ENCODE measurements at regions of chr19 and their contacts with region 1.

Region 1: DNA sequence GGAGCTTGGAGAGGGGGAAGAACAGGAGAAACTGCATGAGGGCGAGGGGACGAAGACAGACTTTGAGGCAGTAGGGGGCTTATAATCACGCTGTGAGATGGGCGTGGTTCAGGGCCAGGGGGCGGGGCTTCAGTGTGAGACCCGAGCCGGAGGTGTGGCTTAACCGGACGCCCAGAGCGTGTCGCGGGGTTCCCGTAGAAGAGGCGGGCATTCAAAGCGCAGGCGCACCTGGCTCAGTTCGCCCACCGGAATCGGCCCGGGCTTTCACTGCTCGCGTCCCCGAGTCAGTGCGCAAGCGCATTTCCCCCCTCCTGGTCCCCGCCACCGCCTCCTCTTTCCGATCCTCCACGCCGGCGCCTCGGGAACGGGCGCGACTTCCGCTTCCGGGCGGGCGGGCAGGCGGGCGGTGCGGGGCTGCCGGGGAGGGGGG is 225 bp upstream of the ZNF865 start:
- DNase-seq: peak; percentile 99
- H3K4me3 Mint-ChIP-seq: peak overlapping the region; percentile 84
- H3K27ac Mint-ChIP-seq: peak overlapping the region; percentile 80
- H3K4me1 Mint-ChIP-seq: peaks cover 46% of the 10 kb centered on the region
- H3K27me3 Mint-ChIP-seq: no peaks in the 10 kb centered on the region
- CTCF ChIP-seq: no peak

Region 2: DNA sequence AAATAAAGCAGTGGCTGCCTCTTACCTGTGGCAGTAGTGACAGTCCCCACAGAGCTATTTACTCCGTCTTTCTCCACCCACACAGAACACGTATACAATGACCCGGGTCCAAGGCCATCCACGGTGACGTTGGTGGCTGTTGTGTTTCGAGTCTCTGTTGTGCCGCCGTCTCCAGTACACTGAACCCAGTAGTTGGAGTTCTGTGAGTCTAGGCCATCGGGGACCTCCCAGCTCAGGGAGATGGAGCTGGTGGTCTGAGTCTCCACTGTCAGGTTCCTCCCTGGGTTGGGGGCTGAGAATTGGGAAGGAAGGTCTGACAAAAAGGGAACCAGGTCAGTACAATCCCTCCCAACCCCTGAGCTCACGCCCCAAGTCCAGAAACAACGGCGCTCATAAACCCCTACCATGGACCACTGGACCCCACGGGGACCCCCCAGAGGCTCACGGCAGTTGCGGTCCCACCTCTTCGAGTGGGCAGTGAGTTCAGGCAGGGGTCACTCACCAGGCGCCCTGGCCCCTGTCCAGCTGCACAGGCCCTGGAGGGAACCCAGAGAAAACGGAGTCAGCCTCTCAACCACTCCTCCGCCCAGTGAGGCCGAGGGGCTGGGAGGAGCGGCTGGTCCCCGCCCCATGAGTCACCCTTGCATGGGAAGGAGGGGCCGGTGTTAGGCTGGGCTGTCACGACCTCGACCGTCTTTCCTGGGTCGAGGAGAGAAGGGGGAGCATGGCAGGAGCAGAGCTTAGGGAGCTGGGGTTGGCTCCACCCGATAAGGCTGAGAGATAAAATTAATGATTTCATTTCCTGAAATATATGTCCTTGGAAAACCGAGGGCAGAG is 398.3 kb before region 1 on chr19:
- CTCF ChIA-PET with region 1: no interaction called
- POLR2A ChIA-PET with region 1: no interaction called
- intact Hi-C with region 1: no loop called
- DNase-seq: peak; percentile 93
- H3K4me3 Mint-ChIP-seq: peak overlapping the region; percentile 66
- H3K27ac Mint-ChIP-seq: peak overlapping the region; percentile 91
- H3K4me1 Mint-ChIP-seq: peaks cover 21% of the 10 kb centered on the region
- H3K27me3 Mint-ChIP-seq: no peaks in the 10 kb centered on the region
- CTCF ChIP-seq: no peak

Region 3: GRCh38 chr19:55467236-55468053 is 137.8 kb before region 1 on chr19:
- CTCF ChIA-PET with region 1: interaction called, 12 read pairs
- POLR2A ChIA-PET with region 1: interaction called, 4 read pairs
- intact Hi-C with region 1: no loop called
- DNase-seq: peak; percentile 65
- H3K4me3 Mint-ChIP-seq: no peak overlapping the region
- H3K27ac Mint-ChIP-seq: no peak overlapping the region
- H3K4me1 Mint-ChIP-seq: peaks cover 2% of the 10 kb centered on the region
- H3K27me3 Mint-ChIP-seq: no peaks in the 10 kb centered on the region
- CTCF ChIP-seq: peak; percentile 98

Region 4: DNA sequence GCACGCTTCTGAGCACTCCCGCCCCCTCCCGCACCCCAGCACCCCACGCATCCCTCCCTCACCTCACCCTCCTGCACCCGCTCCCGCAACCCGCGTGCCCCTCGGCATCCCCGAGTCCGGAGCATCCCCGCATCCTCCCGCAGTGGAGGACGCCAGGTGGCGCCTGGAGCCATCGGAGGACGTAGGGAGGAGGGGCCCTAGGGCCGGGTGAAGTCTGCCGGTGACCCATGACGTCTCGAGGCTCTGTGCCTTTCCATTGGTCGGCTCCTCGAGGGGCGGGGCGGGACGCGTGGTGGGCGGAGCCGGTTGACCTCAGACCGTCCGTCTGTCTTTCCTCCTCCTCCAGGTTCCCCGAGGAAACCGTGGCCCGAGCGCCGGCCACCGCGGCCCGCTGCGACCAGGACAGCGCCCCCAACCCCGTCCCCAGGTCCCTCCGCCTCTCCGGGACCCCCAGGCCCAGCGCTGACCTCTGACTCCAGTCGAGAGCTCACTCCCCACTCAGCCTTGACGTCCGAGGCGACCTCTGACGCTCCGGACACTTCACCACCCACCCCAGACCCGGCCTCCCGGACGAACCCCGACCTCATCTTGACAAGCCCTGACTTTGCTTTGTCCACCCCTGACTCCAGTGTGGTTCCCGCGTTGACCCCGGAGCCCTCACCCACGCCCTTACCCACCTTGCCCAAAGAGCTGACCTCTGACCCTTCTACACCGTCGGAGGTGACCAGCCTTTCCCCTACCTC is 88.2 kb before region 1 on chr19:
- CTCF ChIA-PET with region 1: interaction called, 29 read pairs
- POLR2A ChIA-PET with region 1: interaction called, 4 read pairs
- intact Hi-C with region 1: loop called (anchors 1 kb)
- DNase-seq: peak; percentile 94
- H3K4me3 Mint-ChIP-seq: peak overlapping the region; percentile 73
- H3K27ac Mint-ChIP-seq: peak overlapping the region; percentile 74
- H3K4me1 Mint-ChIP-seq: peaks cover 5% of the 10 kb centered on the region
- H3K27me3 Mint-ChIP-seq: peaks cover 11% of the 10 kb centered on the region
- CTCF ChIP-seq: peak; percentile 79

Region 5: DNA sequence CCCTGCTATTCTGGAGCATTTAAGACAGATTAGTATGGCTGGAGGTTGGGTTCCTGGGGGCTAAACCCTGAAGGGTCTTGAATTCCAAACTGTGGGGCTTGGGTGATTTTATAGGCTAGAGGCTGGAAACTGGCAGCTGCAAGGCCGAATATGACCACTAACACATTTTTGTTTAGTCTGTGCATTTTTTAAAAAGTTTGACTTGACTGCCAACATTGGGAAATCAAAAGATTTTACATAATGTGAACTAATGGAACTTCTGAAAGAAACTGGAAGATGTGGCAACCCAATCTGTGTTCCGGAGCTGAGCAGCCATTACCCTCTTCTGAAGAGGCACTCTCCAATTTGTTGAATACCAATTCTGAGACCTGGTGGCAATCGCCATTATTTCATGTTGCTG is 14.1 kb after region 1 on chr19:
- CTCF ChIA-PET with region 1: interaction called, 17 read pairs
- POLR2A ChIA-PET with region 1: interaction called, 15 read pairs
- intact Hi-C with region 1: loop called (anchors 1 kb)
- DNase-seq: no peak
- H3K4me3 Mint-ChIP-seq: no peak overlapping the region
- H3K27ac Mint-ChIP-seq: no peak overlapping the region
- H3K4me1 Mint-ChIP-seq: peaks cover 10% of the 10 kb centered on the region
- H3K27me3 Mint-ChIP-seq: no peaks in the 10 kb centered on the region
- CTCF ChIP-seq: no peak

Region 6: DNA sequence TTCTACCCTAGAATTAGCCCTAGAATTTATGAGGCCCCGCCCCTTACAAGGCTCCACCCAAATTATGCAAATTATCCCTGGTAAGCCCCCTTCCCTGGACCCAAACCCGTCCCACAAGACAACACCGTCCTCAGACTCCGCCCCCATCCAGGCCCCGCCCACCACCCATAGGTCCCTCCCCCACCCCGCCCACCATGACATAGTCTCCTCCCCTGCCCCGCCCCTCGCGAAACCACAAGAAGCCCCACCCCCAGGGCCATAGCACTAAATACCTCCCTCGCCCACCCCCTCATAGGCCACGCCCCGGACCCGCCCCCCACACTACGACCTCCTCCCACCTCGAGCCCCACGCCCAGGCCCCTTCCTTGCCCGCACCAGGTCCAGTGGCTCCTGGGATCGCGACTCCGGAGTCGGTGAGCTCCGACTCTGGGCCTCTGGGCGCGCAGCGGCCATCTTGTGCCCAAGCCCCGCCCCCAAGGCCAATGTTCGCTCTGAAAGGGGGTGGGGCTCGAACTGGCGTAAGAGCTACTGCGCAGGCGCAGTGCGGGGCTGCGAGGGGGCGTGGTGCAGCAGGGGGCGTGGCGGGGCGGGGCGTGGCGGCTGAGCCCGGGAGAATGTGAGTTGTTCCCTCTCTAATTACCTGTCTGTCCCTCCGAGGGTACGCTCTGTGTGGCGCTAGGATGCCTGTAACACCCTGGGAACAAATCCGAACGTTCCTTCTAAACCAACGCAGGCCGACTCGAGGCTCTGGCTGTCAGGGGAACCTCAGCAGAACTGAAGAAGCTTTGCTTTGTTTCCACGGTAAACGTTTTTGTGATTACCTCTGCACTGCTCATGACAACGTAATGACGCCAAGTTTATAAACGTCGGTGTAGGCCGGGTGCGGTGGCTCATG is 19.1 kb after region 1 on chr19 and contains the start of gene ZNF784:
- CTCF ChIA-PET with region 1: interaction called, 23 read pairs
- POLR2A ChIA-PET with region 1: interaction called, 15 read pairs
- intact Hi-C with region 1: loop called (anchors 1 kb)
- DNase-seq: peak; percentile 93
- H3K4me3 Mint-ChIP-seq: peak within 1 kb of the TSS; percentile 91
- H3K27ac Mint-ChIP-seq: peak within 1 kb of the TSS; percentile 99
- H3K4me1 Mint-ChIP-seq: peaks cover 10% of the 10 kb centered on the region
- H3K27me3 Mint-ChIP-seq: no peaks in the 10 kb centered on the region
- CTCF ChIP-seq: no peak
- total RNA-seq, gene ZNF784: 2.7 and 3.1 TPM in 2 replicates

Region 7: DNA sequence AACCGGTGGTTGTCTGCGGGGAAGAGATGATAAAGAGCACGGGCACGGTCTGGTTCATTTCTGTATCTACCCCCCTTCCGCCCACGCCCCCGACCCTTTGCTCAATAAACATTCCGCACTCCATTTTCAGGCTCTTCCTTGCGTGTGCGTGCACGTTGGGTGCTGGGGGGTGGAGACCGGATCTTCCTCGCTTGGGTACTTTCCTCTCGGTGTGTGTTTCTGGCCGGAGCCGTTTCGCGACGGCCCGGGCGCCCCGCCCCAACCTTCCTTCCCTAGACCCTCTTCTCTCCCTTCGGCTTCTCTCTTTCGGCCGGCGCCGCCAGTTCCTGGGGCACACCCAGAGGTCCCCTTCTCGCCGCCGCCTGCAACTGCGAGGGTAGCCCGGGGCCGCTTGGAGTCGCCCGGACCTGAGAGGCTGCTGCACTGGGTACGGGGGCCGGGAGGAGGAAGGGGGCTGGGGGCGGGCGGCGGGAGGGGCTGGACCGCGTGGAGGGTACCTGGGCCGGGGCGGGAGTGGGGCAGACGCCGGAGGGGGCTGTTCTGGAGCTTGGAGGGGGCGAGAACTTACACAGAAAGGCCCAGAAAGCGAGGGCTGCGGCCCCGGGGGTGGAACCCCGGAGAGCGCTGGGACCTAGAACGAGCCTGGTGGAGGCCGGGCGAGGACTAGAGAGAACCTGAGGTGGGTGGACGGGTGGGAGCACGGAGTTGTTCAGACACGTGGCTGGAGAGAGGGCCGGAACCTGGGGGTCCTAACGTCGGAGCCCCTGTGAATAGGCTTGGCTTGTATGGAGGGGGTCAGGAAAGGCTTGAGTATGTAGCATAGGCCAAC is 38.3 kb after region 1 on chr19 and contains the start of gene ZNF581:
- CTCF ChIA-PET with region 1: interaction called, 12 read pairs
- POLR2A ChIA-PET with region 1: interaction called, 4 read pairs
- intact Hi-C with region 1: no loop called
- DNase-seq: peak; percentile 79
- H3K4me3 Mint-ChIP-seq: peak within 1 kb of the TSS; percentile 82
- H3K27ac Mint-ChIP-seq: peak within 1 kb of the TSS; percentile 94
- H3K4me1 Mint-ChIP-seq: peaks cover 18% of the 10 kb centered on the region
- H3K27me3 Mint-ChIP-seq: no peaks in the 10 kb centered on the region
- CTCF ChIP-seq: no peak
- total RNA-seq, gene ZNF581: 22.3 and 25.7 TPM in 2 replicates